Activated T-helper 1 cell treated with anti-CD3 and anti-CD28 coated beads, Interleukin-12 subunit alpha, Interleukin-12 subunit beta, Interleukin-2, Interleukin-4 antibody, amounts not matched to agents 30 ng/mL and 10 ng/mL and 1 ng/mL, durations not matched to agents 14 hours and 24 hours and 36 hours (primary cell): ENCODE measurements at regions of chr11 and their contacts with region 1.

Region 1: DNA sequence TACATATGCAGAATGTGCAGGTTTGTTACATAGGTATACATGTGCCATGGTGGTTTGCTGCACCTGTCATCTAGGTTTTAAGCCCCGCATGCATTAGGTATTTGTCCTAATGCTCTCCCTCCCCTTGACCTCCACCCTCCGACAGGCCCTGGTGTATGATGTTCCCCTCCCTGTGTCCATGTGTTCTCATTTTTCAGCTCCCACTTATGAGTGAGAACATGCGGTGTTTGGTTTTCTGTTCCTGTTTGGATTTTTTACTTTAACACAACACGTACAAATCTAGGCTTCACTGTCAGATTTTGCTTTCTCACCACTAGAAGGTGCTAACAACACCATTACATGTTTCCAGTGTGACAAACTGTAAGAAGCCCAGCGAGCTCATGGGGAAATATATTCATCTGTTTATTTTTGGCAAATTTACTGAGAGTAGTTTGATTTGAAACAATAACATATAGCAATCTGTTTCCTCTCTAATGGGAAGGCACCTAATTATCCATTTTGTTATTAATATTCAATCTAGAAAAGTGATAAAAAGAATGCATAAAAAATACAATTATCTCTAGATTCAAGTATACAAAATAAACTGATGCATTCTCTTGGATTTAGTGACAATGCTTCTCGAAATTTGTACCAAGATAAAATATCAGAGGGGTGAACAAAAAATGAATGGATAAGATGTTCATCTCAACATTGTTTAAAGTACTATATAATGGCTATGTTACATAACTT is 23.2 kb upstream of the BIRC3 start:
- DNase-seq: no peak
- H3K4me3 Mint-ChIP-seq: peak overlapping the region; percentile 84
- H3K27ac Mint-ChIP-seq: peak overlapping the region; percentile 90
- H3K4me1 Mint-ChIP-seq: peaks cover 41% of the 10 kb centered on the region
- H3K27me3 Mint-ChIP-seq: no peaks in the 10 kb centered on the region

Region 2: GRCh38 chr11:102135256-102135655 is 158.8 kb before region 1 on chr11:
- intact Hi-C with region 1: no loop called
- DNase-seq: no peak
- H3K4me3 Mint-ChIP-seq: no peak overlapping the region
- H3K27ac Mint-ChIP-seq: no peak overlapping the region
- H3K4me1 Mint-ChIP-seq: no peaks in the 10 kb centered on the region
- H3K27me3 Mint-ChIP-seq: no peaks in the 10 kb centered on the region

Region 3: DNA sequence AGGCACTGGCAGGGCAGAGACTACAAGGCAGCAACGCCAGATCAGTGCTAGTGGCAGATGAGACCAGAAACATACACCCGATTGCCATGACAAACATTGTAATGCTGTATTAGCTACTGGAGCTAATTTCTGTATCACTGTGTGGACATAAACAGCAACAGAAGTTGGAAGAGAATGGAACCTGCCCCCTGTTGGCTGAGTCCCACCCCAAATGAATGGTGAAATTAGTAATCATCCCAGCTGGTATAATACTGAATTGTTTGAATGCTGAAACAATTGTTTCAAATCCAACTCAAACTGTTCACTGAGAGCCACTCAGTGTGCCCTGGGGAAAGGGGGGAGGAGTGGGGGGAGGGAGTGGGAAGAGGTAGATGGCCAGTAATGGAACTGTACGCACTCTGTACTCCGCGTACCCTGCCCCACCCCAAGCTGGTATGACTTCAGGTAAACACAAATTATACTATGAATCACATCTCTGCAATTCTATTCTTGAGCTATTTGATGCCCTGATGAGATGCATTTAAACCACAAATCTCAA is 12.1 kb after region 1 on chr11:
- intact Hi-C with region 1: loop called (anchors 1 kb)
- DNase-seq: no peak
- H3K4me3 Mint-ChIP-seq: peak overlapping the region; percentile 72
- H3K27ac Mint-ChIP-seq: peak overlapping the region; percentile 59
- H3K4me1 Mint-ChIP-seq: peaks cover 57% of the 10 kb centered on the region
- H3K27me3 Mint-ChIP-seq: no peaks in the 10 kb centered on the region